H1 (cell line): ENCODE measurements at regions of chr22 and their contacts with region 1.

Region 1: GRCh38 chr22:47012589-47013411 is 250.3 kb downstream of the TBC1D22A start:
- DNase-seq: no peak
- H3K4me3 ChIP-seq: no peak overlapping the region
- H3K27ac ChIP-seq: no peak overlapping the region
- H3K4me1 ChIP-seq: no peaks in the 10 kb centered on the region; a peak in 2 of 7 replicates
- H3K27me3 ChIP-seq: no peaks in the 10 kb centered on the region
- CTCF ChIP-seq: peak; percentile 28 to 52 (median 41)
- EP300 ChIP-seq: no peak
- POLR2A ChIP-seq: no peak
- RAD21 ChIP-seq: peak; percentile 5 to 25; a peak in 2 of 4 replicates

Region 2: DNA sequence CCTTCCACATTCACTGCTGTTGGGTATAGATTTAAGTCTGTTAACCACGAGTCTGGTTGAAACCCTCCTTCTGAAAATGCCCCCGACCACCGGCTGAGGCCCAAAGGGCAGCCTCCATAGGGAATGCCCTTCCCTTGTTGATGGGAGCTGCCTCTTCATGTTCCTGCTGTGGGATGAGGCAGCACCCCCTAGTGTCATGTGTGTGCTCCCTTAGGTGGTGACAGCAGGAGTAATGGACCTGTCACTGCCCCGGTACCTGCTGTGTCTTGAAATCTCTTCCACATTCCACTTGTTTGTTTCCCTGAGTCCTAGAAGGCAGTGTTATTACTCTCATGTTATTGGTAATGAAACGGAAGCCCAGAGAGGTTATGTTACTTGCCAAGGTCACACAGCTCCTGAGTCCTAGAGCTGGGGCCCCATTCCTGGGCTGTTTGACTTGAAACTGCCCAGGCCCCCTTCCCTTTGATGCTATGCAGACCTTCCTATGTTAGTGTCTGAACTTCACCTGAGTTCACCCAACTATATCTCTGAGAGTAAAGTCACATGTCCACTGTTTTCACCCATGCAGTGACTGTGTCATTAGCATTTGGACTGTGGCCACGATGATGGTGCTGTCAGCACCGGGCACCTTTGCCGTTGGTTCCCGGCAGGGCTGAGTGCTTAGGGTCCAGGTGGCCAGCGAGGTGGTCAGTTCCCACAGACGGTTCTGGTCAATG is 16.0 kb before region 1 on chr22:
- CTCF ChIA-PET with region 1: interaction called, 14 read pairs
- POLR2A ChIA-PET with region 1: no interaction called
- DNase-seq: no peak
- H3K4me3 ChIP-seq: no peak overlapping the region
- H3K27ac ChIP-seq: no peak overlapping the region
- H3K4me1 ChIP-seq: no peaks in the 10 kb centered on the region; a peak in 1 of 7 replicates
- H3K27me3 ChIP-seq: no peaks in the 10 kb centered on the region
- CTCF ChIP-seq: peak in 1 of 3 experiments; percentile 13; a peak in 1 of 4 replicates
- EP300 ChIP-seq: no peak
- POLR2A ChIP-seq: no peak
- RAD21 ChIP-seq: peak in 1 of 2 experiments; percentile 24; a peak in 1 of 4 replicates

Region 3: DNA sequence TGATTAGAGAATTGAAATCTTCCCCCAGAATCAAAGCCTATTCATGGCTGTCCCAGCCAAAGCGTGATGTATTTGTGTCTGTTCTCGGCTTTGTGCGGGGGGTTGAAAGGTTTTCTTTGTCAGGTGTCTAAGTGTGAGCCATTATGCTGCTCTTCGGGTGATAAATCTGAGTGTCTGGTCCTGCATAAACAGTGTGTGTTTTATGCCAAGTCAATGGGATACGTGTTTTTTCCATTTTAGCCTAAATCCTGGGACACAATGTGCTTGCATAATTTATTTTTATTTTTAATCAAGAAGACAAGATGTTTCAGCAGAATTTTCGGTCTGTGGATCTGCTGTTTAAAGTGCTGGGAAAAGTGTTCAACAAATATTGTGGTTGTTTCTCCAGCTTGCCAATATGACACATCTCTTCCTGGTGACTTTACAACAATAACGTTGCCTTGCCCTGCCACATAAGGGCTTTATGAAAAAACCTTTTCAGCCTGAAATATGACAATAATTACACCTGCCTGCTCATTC is 17.4 kb after region 1 on chr22:
- CTCF ChIA-PET with region 1: interaction called, 16 read pairs
- POLR2A ChIA-PET with region 1: interaction called, 5 read pairs
- DNase-seq: no peak
- H3K4me3 ChIP-seq: no peak overlapping the region
- H3K27ac ChIP-seq: no peak overlapping the region
- H3K4me1 ChIP-seq: peaks cover 6 to 23% (median 8%) of the 10 kb centered on the region in 4 experiments; a peak in 6 of 7 replicates
- H3K27me3 ChIP-seq: peaks cover 0 to 6% (median 2%) of the 10 kb centered on the region in 4 experiments; a peak in 3 of 7 replicates
- CTCF ChIP-seq: no peak
- EP300 ChIP-seq: no peak
- POLR2A ChIP-seq: no peak
- RAD21 ChIP-seq: no peak